Mammary epithelial cell (primary cell): ENCODE measurements at regions of chr11 and their contacts with region 1.

Region 1: GRCh38 chr11:70826541-70827335 is 425.6 kb downstream of the SHANK2 start:
- DNase-seq: no peak
- H3K4me3 ChIP-seq: peak overlapping the region in 2 of 3 experiments; percentile 18 to 29
- H3K27ac ChIP-seq: no peak overlapping the region
- H3K4me1 ChIP-seq: peaks cover 6% of the 10 kb centered on the region
- H3K27me3 ChIP-seq: peaks cover 4% of the 10 kb centered on the region
- CTCF ChIP-seq: no peak

Region 2: GRCh38 chr11:70885821-70886231 is 59.1 kb after region 1 on chr11:
- CTCF ChIA-PET with region 1: no interaction called
- dilution Hi-C with region 1: loop called (anchors 5 kb)
- in situ Hi-C with region 1: no loop called
- intact Hi-C with region 1: no loop called
- DNase-seq: no peak
- H3K4me3 ChIP-seq: no peak overlapping the region
- H3K27ac ChIP-seq: no peak overlapping the region
- H3K4me1 ChIP-seq: no peaks in the 10 kb centered on the region
- H3K27me3 ChIP-seq: no peaks in the 10 kb centered on the region
- CTCF ChIP-seq: no peak

Region 3: DNA sequence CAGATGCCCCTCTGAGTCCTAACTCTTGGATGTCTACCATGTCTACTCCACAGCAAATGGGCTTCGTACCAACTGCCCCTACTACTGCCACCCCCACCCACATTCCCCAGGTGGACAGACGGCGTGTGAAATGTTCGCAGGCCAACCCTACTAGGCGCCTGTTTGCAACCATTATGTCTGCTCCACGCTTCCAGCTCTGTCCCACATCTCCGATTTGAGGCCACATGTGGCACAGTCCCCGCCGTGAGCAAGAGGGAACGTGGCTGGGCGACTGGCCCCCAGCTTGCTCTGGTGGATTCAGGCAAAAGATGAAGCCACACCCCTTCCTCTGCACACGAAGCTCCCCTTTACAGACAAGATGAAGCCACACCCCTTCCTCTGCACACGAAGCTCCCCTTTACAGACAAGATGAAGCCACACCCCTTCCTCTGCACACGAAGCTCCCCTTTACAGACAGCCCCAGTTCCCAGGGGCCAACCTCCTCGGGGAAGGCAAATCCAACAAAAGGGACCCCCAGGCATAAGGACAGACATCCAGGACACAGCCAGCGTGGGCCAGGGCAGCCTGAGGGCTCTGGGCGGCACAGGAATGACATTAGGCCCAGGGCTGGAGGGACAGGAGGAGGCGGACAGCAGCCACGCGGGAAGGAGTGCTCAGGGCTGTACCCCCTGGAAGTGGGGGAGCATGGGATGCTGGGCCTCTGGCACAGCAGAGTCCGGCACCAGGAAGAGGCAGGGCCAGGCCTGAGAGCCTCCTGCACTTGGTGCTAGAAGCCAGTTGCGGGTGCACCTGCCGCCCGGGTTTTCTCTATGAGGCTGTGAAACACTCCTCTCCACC is 319.5 kb after region 1 on chr11:
- CTCF ChIA-PET with region 1: no interaction called
- dilution Hi-C with region 1: no loop called
- in situ Hi-C with region 1: no loop called
- intact Hi-C with region 1: no loop called
- DNase-seq: no peak
- H3K4me3 ChIP-seq: no peak overlapping the region
- H3K27ac ChIP-seq: no peak overlapping the region
- H3K4me1 ChIP-seq: no peaks in the 10 kb centered on the region
- H3K27me3 ChIP-seq: no peaks in the 10 kb centered on the region
- CTCF ChIP-seq: no peak